AG04449 (cell line): ENCODE measurements at regions of chr17 and their contacts with region 1.

Region 1: GRCh38 chr17:47229535-47230443 is 20.6 kb downstream of the MYL4 start:
- DNase-seq: peak; percentile 79
- H3K4me3 ChIP-seq: peak overlapping the region; percentile 21; the same call in 1 of the 2 replicates
- CTCF ChIP-seq: peak; percentile 96

Region 2: GRCh38 chr17:47131761-47132160 is 98.0 kb before region 1 on chr17:
- CTCF ChIA-PET with region 1: no interaction called
- POLR2A ChIA-PET with region 1: no interaction called
- DNase-seq: no peak
- H3K4me3 ChIP-seq: no peak overlapping the region
- CTCF ChIP-seq: no peak

Region 3: DNA sequence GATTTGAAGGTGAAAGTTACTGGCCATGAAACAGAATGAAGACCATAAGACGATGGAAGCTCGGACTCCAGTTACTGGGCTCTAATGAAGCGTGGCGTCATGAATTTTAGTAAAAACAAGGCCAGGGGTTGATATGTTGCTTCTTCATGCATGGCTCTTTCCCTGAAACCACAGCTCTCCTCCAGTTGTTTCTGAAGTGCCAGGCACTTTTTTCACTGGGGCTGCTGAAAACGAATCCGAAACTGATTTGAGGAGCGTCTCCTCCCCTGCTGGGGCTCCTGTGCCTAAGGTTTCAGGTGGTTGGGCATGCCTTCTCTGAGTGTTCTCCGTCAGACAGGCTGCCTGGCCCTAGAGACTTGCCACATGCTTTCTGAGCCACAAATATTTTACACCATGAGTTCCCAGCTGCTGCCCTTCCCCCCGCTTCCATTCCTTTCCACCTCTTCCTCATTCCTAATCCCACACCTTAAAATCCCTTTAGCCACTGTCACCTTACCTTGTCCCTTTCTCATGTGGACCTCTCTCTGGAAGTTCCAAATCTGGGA is 24.3 kb before region 1 on chr17:
- CTCF ChIA-PET with region 1: interaction called, 16 read pairs
- POLR2A ChIA-PET with region 1: no interaction called
- DNase-seq: peak; percentile 63
- H3K4me3 ChIP-seq: no peak overlapping the region; the same call in 1 of the 2 replicates
- CTCF ChIP-seq: no peak

Region 4: DNA sequence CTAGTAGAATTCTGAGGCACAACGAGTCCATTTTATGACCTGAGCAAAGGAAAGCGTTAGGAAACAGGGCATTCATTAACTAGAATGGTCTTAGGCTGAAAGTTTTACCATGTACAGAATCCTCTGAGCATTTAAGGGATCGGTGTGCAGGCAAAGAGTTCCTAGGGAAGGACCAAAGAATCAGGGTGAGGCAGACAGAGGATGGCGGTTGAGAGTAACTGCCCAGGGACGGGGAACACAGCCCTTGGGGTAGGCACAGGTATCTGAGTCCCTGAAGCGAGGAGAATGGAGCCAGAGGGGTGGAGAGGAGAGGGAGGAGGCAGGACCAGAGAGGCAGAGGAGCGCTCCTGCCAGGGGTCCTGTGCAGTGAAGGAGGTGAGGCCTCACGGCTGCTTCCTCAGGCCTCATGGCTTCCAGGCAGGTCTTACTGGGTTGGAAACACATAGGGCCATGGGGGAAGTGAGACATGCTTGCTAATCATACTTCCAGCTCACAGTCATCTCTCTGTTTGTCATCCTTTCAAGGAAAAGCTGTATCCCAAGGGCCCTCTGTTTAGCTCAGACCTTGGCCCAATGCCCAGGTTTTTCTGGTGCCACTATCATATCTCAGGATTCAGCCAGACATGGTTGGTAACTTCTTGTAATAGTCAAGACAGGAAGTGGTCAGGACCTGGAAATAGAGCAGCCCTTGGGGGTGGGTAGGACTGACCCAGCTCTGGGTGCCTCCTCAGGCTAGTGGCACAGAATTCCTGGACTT is 10.0 kb after region 1 on chr17:
- CTCF ChIA-PET with region 1: interaction called, 40 read pairs
- POLR2A ChIA-PET with region 1: no interaction called
- DNase-seq: peak; percentile 96
- H3K4me3 ChIP-seq: no peak overlapping the region
- CTCF ChIP-seq: no peak

Region 5: GRCh38 chr17:47305302-47305923 is 75.6 kb after region 1 on chr17:
- CTCF ChIA-PET with region 1: interaction called, 24 read pairs
- POLR2A ChIA-PET with region 1: no interaction called
- DNase-seq: peak; percentile 85
- H3K4me3 ChIP-seq: no peak overlapping the region
- CTCF ChIP-seq: no peak